GM10248 (cell line): ENCODE measurements at regions of chr4 and their contacts with region 1.

Region 1: GRCh38 chr4:75653845-75654503 is 19.2 kb downstream of the G3BP2 start:
- DNase-seq: no peak
- CTCF ChIP-seq: peak; percentile 11

Region 2: DNA sequence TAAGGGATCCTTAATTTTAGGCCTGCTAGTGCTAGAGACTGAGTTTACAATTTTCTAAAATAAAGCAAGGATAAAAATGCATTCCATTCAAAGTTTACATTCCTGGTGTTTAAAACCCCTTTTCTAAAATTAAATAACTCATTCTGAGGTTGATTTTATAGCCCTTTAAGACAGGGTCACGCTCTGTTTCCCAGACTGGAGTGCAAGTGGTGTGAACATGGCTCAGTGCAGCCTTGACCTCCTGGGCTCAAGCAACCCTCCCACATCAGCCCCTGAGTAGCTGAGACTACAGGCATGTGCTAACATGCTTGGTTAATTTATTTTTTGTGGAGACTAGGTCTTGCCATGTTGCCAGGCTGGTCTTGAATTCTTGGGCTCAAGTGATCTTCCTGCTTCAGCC is 16.8 kb before region 1 on chr4:
- CTCF ChIA-PET with region 1: interaction called, 17 read pairs
- POLR2A ChIA-PET with region 1: no interaction called
- DNase-seq: no peak
- CTCF ChIP-seq: no peak

Region 3: GRCh38 chr4:75673027-75673958 is 19.3 kb after region 1 on chr4 and contains the start of gene G3BP2:
- CTCF ChIA-PET with region 1: interaction called, 63 read pairs
- POLR2A ChIA-PET with region 1: no interaction called
- DNase-seq: peak; percentile 98
- CTCF ChIP-seq: no peak